OCI-LY7 (cell line): ENCODE measurements at regions of chr11 and their contacts with region 1.

Region 1: GRCh38 chr11:122655527-122656072 is at the start of gene UBASH3B:
- DNase-seq: peak; percentile 80
- H3K4me3 ChIP-seq: peak within 1 kb of the TSS; percentile 77
- H3K27ac ChIP-seq: peak within 1 kb of the TSS; percentile 43
- H3K4me1 ChIP-seq: peaks cover 46% of the 10 kb centered on the region
- CTCF ChIP-seq: no peak; the same call in 1 of the 2 replicates
- total RNA-seq, gene UBASH3B: 36.3 and 54.7 TPM in 2 replicates

Region 2: GRCh38 chr11:122604621-122605020 is 51.0 kb before region 1 on chr11:
- CTCF ChIA-PET with region 1: no interaction called
- POLR2A ChIA-PET with region 1: no interaction called
- intact Hi-C with region 1: no loop called
- DNase-seq: no peak
- H3K4me3 ChIP-seq: no peak overlapping the region
- H3K27ac ChIP-seq: no peak overlapping the region
- H3K4me1 ChIP-seq: no peaks in the 10 kb centered on the region
- CTCF ChIP-seq: no peak

Region 3: DNA sequence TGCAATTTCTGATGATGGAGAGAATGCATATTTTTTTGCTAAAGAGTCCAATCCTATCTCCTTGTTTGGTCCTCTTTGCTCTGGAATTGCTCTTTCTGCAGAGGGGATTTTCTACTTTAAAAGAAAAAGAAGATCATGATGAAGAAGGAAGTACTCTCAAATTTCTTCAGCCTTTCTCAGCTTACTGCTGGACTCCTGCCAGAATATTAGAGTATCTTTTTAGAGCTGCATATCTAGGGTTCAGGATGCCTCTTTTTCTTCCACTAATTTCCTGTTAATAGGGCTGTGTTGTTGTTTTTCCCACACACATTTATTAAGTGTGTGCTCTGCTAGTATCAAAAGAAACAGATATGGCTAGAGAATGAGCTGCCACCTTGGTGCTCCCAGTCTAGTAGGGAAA is 18.1 kb after region 1 on chr11:
- CTCF ChIA-PET with region 1: interaction called, 7 read pairs
- POLR2A ChIA-PET with region 1: interaction called, 58 read pairs
- intact Hi-C with region 1: no loop called
- DNase-seq: no peak
- H3K4me3 ChIP-seq: no peak overlapping the region
- H3K27ac ChIP-seq: peak overlapping the region; percentile 26
- H3K4me1 ChIP-seq: peaks cover 76% of the 10 kb centered on the region
- CTCF ChIP-seq: no peak

Region 4: DNA sequence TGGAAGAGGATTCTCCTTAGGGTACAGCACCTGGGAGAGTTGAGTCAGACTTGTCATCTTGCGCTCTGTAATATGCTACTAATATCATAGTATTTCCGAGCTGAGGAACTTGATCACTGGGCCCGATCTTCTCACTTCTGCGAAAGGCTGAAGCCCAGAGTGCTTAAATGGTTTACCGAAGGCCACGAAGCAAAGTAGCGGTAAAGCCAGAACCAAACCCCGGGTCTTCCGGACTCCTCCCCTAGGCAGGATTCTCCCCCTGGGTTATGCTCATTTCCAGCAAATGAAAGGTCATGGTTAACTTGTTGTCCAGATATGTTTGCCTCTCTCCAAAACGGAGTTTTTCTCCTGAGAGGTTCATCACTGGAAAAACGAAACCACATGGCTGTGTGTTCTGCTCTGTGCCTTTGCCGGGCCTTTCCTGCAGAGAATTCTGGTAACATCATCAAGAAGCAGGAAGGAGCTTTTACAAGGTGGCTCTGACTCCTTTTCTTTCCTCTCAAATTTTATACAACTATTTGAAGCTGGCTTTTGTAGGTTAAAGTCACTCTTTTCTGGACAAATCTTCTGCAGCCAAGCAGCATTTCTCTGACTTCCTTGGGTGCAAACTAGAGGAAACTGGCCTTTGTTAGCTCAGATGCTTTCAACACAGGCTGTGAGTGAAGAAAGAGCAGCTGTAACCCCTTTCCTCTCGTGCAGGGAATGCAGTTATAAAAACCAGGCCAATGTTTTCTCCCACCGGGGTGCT is 35.4 kb after region 1 on chr11:
- CTCF ChIA-PET with region 1: interaction called, 3 read pairs
- POLR2A ChIA-PET with region 1: interaction called, 175 read pairs
- intact Hi-C with region 1: loop called (anchors 1 kb)
- DNase-seq: peak; percentile 75
- H3K4me3 ChIP-seq: peak overlapping the region; percentile 7
- H3K27ac ChIP-seq: peak overlapping the region; percentile 99
- H3K4me1 ChIP-seq: peaks cover 87% of the 10 kb centered on the region
- CTCF ChIP-seq: no peak

Region 5: GRCh38 chr11:122749005-122749687 is 93.5 kb after region 1 on chr11:
- CTCF ChIA-PET with region 1: interaction called, 8 read pairs
- POLR2A ChIA-PET with region 1: interaction called, 43 read pairs
- intact Hi-C with region 1: no loop called
- DNase-seq: peak; percentile 70
- H3K4me3 ChIP-seq: peak overlapping the region; percentile 4
- H3K27ac ChIP-seq: no peak overlapping the region
- H3K4me1 ChIP-seq: peaks cover 95% of the 10 kb centered on the region
- CTCF ChIP-seq: no peak

Region 6: DNA sequence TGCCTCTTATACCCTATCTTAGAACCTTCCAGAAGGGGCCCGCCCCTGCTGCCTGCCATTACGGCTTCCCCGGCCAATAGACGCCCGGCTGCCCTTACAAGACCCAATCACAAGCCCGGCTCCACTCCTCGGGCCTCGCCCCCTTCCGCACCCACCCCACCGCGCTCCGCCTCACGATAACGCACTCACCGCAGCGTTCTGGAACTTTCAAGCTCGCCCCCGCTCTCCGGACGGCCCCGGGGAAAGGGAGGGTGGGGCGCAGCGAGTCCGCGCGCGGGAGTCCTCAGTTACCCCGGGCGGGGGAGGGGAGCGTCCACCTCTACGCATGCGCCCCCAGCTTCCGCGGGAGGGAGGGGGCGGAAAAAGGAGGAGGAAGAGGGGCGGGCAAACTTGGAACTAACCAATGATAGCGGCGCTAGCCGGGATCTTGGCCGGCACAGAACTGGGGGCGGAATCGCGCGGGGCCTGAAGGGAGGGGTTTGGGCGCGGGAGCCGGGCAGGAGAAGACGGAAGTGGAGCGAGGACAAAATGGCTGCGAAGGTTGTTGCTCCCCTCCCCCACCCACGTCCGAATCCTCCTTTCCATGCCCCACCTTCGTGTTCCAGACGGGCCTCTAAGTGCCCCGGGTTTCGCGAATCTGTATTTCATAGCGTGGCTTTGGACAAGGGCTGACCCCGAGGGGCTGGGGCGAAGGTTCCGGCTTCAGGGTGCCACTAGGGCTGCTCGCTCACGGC is 406.7 kb after region 1 on chr11:
- CTCF ChIA-PET with region 1: no interaction called
- POLR2A ChIA-PET with region 1: interaction called, 4 read pairs
- intact Hi-C with region 1: loop called (anchors 5 kb)
- DNase-seq: peak; percentile 98
- H3K4me3 ChIP-seq: peak overlapping the region; percentile 96
- H3K27ac ChIP-seq: peak overlapping the region; percentile 92
- H3K4me1 ChIP-seq: peaks cover 53% of the 10 kb centered on the region
- CTCF ChIP-seq: no peak